Esophagus muscularis mucosa (tissue), 4 donors: ENCODE measurements at regions of chr12 and their contacts with region 1.

Region 1: GRCh38 chr12:64404470-64405256 is 471 bp downstream of the XPOT start:
- DNase-seq: no peak
- H3K4me3 ChIP-seq: peak overlapping the region; percentile 76 to 100 (median 94)
- H3K27ac ChIP-seq: peak overlapping the region; percentile 98 to 99 (median 98)
- H3K4me1 ChIP-seq: peaks cover 10 to 21% (median 20%) of the 10 kb centered on the region in 4 donors
- H3K27me3 ChIP-seq: no peaks in the 10 kb centered on the region
- CTCF ChIP-seq: no peak
- EP300 ChIP-seq: no peak
- POLR2A ChIP-seq: no peak

Region 2: GRCh38 chr12:64451687-64452558 is 47.3 kb after region 1 on chr12 and contains the start of gene TBK1:
- intact Hi-C with region 1: loop called (anchors 5 kb)
- DNase-seq: peak; percentile 97
- H3K4me3 ChIP-seq: peak within 1 kb of the TSS; percentile 89 to 98 (median 94)
- H3K27ac ChIP-seq: peak within 1 kb of the TSS; percentile 93 to 99 (median 98)
- H3K4me1 ChIP-seq: peaks cover 13 to 40% (median 35%) of the 10 kb centered on the region in 4 donors
- H3K27me3 ChIP-seq: no peaks in the 10 kb centered on the region
- CTCF ChIP-seq: peak in 1 of 3 experiments; percentile 23
- EP300 ChIP-seq: no peak
- POLR2A ChIP-seq: peak; percentile 14
- total RNA-seq, gene TBK1: 21.2 to 24.1 (median 22.6) TPM

Region 3: GRCh38 chr12:64864319-64864718 is 459.7 kb after region 1 on chr12:
- intact Hi-C with region 1: no loop called
- DNase-seq: peak; percentile 57
- H3K4me3 ChIP-seq: no peak overlapping the region
- H3K27ac ChIP-seq: no peak overlapping the region
- H3K4me1 ChIP-seq: no peaks in the 10 kb centered on the region
- H3K27me3 ChIP-seq: peaks cover 0 to 3% (median 0%) of the 10 kb centered on the region in 4 donors
- CTCF ChIP-seq: no peak
- EP300 ChIP-seq: no peak
- POLR2A ChIP-seq: no peak